Panc1 (cell line): ENCODE measurements at regions of chr1 and their contacts with region 1.

Region 1: GRCh38 chr1:90114521-90115141 is 119.7 kb downstream of the ZNF326 start:
- DNase-seq: peak; percentile 51
- ATAC-seq: peak; percentile 78
- H3K4me3 ChIP-seq: no peak overlapping the region
- H3K27ac ChIP-seq: no peak overlapping the region
- H3K4me1 ChIP-seq: no peaks in the 10 kb centered on the region
- H3K27me3 ChIP-seq: peaks cover 28% of the 10 kb centered on the region
- CTCF ChIP-seq: peak; percentile 77; the same call in 1 of the 2 replicates

Region 2: DNA sequence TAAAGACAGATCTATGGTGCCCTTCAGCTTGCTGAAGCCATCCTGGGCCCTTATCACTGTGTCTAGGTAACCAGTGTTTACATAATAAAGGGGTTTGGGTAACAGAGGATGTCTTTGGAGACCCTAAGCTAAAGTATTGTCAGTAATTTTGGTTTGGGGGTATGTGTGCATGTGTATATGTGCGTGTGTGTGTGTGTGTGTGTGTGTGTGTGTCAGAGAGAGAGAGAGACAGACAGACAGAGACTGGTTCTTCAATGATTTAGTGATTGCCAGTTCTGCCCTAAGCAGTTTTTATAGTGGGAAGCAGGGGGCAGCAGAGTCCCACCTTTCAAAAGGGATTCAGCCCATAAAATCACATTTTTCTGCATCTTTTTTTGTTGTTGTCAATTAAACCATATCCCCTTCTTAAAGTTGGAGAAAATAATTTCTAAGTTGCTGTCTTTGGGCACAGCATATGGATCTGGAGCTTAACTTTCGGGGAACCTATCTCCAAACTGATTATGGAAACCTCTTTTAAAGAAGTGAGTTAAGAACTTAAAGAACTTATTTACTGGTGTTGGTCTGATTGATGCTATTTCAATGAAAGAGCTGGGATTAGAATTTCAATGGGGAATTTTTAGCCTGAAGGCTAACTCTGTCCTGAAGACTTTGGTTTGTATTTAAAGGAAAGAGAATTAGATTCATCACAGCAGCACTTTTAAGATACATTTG is 68.6 kb before region 1 on chr1:
- CTCF ChIA-PET with region 1: no interaction called
- POLR2A ChIA-PET with region 1: no interaction called
- in situ Hi-C with region 1: no loop called
- intact Hi-C with region 1: loop called (anchors 5 kb)
- DNase-seq: peak; percentile 25
- ATAC-seq: peak; percentile 74; the same call in 1 of the 2 replicates
- H3K4me3 ChIP-seq: no peak overlapping the region
- H3K27ac ChIP-seq: no peak overlapping the region
- H3K4me1 ChIP-seq: no peaks in the 10 kb centered on the region
- H3K27me3 ChIP-seq: peaks cover 3% of the 10 kb centered on the region; the same call in 1 of the 2 replicates
- CTCF ChIP-seq: peak; percentile 84

Region 3: GRCh38 chr1:90133133-90133532 is 18.5 kb after region 1 on chr1:
- CTCF ChIA-PET with region 1: no interaction called
- POLR2A ChIA-PET with region 1: no interaction called
- in situ Hi-C with region 1: no loop called
- intact Hi-C with region 1: no loop called
- DNase-seq: no peak
- ATAC-seq: peak; percentile 89
- H3K4me3 ChIP-seq: no peak overlapping the region
- H3K27ac ChIP-seq: no peak overlapping the region
- H3K4me1 ChIP-seq: no peaks in the 10 kb centered on the region
- H3K27me3 ChIP-seq: peaks cover 7% of the 10 kb centered on the region; the same call in 1 of the 2 replicates
- CTCF ChIP-seq: peak; percentile 78

Region 4: DNA sequence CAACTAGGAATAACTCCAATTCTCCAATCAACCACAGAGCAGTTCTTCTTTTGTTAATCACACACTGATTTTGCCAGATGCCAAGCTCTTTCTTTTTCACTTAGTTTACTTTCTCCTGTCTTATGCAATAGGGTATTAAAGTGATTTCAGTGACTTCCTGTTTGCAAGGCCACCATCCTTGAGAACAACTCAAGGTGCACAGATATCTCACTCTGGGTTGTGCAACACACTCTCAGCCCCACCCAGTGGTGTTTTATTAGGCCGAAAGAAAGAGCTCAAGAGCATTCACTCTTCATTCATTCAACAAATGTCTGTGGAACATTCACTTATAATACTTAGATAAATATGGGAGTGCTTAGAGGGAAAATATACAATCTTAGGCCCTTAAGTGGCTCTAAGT is 232.7 kb after region 1 on chr1:
- CTCF ChIA-PET with region 1: no interaction called
- POLR2A ChIA-PET with region 1: no interaction called
- in situ Hi-C with region 1: no loop called
- intact Hi-C with region 1: no loop called
- DNase-seq: no peak
- ATAC-seq: no peak
- H3K4me3 ChIP-seq: no peak overlapping the region
- H3K27ac ChIP-seq: no peak overlapping the region
- H3K4me1 ChIP-seq: no peaks in the 10 kb centered on the region
- H3K27me3 ChIP-seq: no peaks in the 10 kb centered on the region
- CTCF ChIP-seq: no peak

Region 5: GRCh38 chr1:90707363-90707710 is 592.7 kb after region 1 on chr1:
- CTCF ChIA-PET with region 1: no interaction called
- POLR2A ChIA-PET with region 1: no interaction called
- in situ Hi-C with region 1: no loop called
- intact Hi-C with region 1: loop called (anchors 10 kb)
- DNase-seq: no peak
- ATAC-seq: no peak
- H3K4me3 ChIP-seq: no peak overlapping the region
- H3K27ac ChIP-seq: no peak overlapping the region
- H3K4me1 ChIP-seq: no peaks in the 10 kb centered on the region
- H3K27me3 ChIP-seq: peaks cover 29% of the 10 kb centered on the region
- CTCF ChIP-seq: no peak

Region 6: DNA sequence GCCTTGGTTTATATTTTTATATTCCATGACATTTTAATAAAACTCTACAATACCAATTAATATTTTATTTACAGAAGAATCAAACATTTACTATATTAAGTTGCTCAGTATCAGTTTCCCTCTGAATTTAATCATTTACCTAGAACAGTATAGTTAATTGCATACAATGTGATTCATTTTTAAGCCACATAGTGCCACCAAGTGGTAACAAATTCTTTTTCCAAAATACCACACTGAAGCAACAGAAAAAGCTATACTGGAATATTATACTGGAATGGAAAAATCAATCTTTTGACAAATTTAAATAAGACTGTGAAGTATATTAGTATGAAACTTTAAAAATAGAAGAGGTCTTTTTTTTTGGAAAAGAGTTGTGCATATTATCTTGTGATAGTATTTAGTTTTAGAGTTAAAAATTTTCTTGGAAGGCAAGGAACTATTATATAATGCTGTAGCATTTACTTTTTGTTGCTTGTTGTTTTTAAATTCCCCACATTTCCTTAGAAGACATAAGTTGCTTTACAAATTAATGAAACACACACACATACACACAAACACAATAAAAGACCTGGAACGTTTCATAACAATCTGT is 849.9 kb after region 1 on chr1:
- CTCF ChIA-PET with region 1: no interaction called
- POLR2A ChIA-PET with region 1: no interaction called
- in situ Hi-C with region 1: no loop called
- intact Hi-C with region 1: loop called (anchors 10 kb)
- DNase-seq: peak; percentile 4
- ATAC-seq: peak; percentile 76; the same call in 1 of the 2 replicates
- H3K4me3 ChIP-seq: no peak overlapping the region
- H3K27ac ChIP-seq: no peak overlapping the region
- H3K4me1 ChIP-seq: no peaks in the 10 kb centered on the region
- H3K27me3 ChIP-seq: no peaks in the 10 kb centered on the region
- CTCF ChIP-seq: peak; percentile 27; the same call in 1 of the 2 replicates

Region 7: GRCh38 chr1:91282695-91283420 is 1168.2 kb after region 1 on chr1:
- CTCF ChIA-PET with region 1: no interaction called
- POLR2A ChIA-PET with region 1: no interaction called
- in situ Hi-C with region 1: no loop called
- intact Hi-C with region 1: loop called (anchors 10 kb)
- DNase-seq: peak; percentile 56
- ATAC-seq: peak; percentile 90
- H3K4me3 ChIP-seq: peak overlapping the region in 1 of 2 experiments; percentile 19; a peak in 1 of 4 replicates
- H3K27ac ChIP-seq: no peak overlapping the region
- H3K4me1 ChIP-seq: no peaks in the 10 kb centered on the region
- H3K27me3 ChIP-seq: peaks cover 4% of the 10 kb centered on the region; the same call in 1 of the 2 replicates
- CTCF ChIP-seq: peak; percentile 91